ENCODE measurements at regions of chr7 and their contacts with region 1.

Region 1: DNA sequence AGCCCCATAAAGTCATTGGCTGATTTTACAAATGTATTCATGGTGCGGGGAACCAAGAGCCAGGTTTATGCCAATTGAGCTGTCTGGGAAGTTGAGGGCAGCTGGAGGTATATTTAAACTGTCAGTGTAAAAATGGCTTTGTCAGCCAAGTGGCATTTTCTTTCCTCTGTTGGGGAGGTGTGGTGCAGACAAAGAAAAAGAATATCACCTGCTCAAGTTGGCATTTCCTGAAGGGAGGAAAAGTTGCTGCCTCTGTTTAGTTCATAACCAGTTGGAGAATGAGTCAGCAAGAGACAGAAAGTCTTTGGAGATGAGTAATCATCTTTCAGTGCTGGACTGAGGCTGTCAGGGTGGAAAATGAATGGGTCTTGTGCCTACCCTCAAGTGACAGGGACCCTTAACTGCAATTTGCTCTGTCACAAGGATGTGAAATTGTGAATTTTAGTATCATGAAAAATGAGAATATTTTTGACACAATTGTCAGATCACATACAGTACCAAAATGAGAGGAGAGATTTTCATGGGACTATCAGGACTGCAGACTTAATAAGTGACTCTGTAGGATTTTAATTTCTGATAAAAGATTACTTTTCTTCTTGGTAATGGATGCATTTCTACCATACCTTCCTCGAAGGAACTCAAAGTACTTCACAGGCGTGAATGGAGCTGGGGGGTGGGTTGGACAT is 137.3 kb downstream of the ANLN start:
- DNase-seq: peak; percentile 29
- H3K4me3 ChIP-seq: no peak overlapping the region
- H3K27ac ChIP-seq: no peak overlapping the region
- H3K4me1 ChIP-seq: peaks cover 11% of the 10 kb centered on the region
- H3K27me3 ChIP-seq: peaks cover 0 to 3% of the 10 kb centered on the region in 2 experiments
- CTCF ChIP-seq: no peak
- POLR2A ChIP-seq: no peak

Region 2: DNA sequence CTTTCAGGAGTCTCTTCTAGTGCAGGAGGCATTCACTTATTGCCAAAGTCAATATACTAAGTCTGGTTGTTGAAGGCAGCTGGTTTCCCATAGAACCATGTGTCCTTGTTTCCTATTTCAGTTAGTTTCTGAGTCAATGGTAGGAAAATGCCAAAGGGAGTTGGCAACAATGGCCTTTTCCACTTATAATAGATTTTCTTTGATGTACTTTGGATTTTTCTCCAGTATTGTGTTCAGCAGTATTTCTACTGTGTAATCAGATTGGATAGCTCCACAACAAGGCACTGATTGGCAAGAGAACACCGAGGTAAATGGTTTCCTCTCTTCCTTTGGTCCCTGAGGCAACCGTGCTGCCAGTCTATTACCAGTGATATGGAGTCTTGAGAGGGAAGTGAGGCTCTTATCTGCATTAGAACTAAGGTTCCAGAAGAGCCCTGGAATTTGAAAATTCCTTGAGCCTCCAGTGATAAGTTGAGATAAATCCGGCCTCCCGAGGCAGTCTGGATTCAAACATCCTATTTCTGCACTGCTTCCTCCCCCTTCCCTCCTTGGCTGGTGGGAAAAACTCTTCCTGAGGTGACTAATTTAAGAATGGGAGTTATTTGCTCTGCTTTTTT is 734.0 kb before region 1 on chr7:
- CTCF ChIA-PET with region 1: no interaction called
- POLR2A ChIA-PET with region 1: no interaction called
- dilution Hi-C with region 1: no loop called
- intact Hi-C with region 1: no loop called
- DNase-seq: peak; percentile 91
- H3K4me3 ChIP-seq: no peak overlapping the region
- H3K27ac ChIP-seq: peak overlapping the region; percentile 40
- H3K4me1 ChIP-seq: peaks cover 17% of the 10 kb centered on the region
- H3K27me3 ChIP-seq: no peaks in the 10 kb centered on the region
- CTCF ChIP-seq: no peak
- POLR2A ChIP-seq: no peak

Region 3: DNA sequence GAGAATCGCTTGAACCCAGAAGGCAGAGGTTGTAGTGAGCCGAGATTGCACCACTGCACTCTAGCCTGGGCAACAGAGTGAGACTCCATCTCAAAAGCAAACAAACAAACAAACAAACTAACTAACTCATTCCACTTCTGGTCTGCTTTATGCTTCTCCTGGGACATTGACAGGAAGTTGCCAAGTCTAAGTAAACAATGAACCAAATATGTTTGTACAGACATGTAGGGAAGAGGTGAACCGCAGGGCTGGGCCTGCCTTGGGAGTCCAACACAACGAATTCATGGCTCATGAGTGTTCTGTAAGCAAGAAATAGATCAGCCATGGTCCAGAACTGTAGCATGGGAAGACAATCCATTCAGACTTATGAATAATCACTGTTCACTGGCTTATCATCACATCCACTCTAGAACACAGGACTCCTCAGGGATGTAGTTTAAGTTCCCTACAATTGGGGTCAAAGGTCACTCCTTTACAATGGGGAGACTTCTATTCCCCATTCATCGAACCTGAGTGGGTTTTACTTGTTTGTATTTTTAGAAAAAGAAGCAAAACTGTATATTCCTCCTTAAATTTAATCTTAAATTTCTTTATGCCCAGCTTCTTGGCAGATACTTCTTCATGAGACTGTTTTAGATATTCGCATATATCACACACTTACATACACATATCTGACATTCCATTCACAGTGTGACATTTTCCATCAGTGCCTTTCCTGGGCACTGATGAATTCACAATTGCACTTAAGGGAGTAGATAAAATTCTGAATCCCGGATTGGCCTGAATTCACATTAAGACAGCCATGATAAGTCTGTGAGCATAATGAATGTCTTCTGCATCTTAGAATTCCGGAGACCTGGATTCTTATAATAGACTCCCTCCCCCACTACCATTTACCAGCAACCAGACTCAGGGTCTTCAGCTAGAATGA is 533.1 kb before region 1 on chr7:
- CTCF ChIA-PET with region 1: no interaction called
- POLR2A ChIA-PET with region 1: no interaction called
- dilution Hi-C with region 1: no loop called
- intact Hi-C with region 1: no loop called
- DNase-seq: no peak
- H3K4me3 ChIP-seq: no peak overlapping the region
- H3K27ac ChIP-seq: no peak overlapping the region
- H3K4me1 ChIP-seq: no peaks in the 10 kb centered on the region
- H3K27me3 ChIP-seq: no peaks in the 10 kb centered on the region
- CTCF ChIP-seq: no peak
- POLR2A ChIP-seq: no peak

Region 4: GRCh38 chr7:36473454-36474282 is 53.3 kb before region 1 on chr7:
- CTCF ChIA-PET with region 1: interaction called, 3 read pairs
- POLR2A ChIA-PET with region 1: no interaction called
- dilution Hi-C with region 1: no loop called
- intact Hi-C with region 1: loop called (anchors 2 kb)
- DNase-seq: peak; percentile 40
- H3K4me3 ChIP-seq: no peak overlapping the region
- H3K27ac ChIP-seq: peak overlapping the region; percentile 54
- H3K4me1 ChIP-seq: peaks cover 22% of the 10 kb centered on the region
- H3K27me3 ChIP-seq: no peaks in the 10 kb centered on the region
- CTCF ChIP-seq: peak; percentile 55 to 57
- POLR2A ChIP-seq: no peak

Region 5: GRCh38 chr7:36895192-36895591 is 368.2 kb after region 1 on chr7:
- CTCF ChIA-PET with region 1: no interaction called
- POLR2A ChIA-PET with region 1: no interaction called
- dilution Hi-C with region 1: no loop called
- intact Hi-C with region 1: no loop called
- DNase-seq: peak; percentile 12
- H3K4me3 ChIP-seq: no peak overlapping the region
- H3K27ac ChIP-seq: no peak overlapping the region
- H3K4me1 ChIP-seq: no peaks in the 10 kb centered on the region
- H3K27me3 ChIP-seq: no peaks in the 10 kb centered on the region
- CTCF ChIP-seq: no peak
- POLR2A ChIP-seq: no peak